Activated T-helper 1 cell treated with anti-CD3 and anti-CD28 coated beads, Interleukin-12 subunit alpha, Interleukin-12 subunit beta, Interleukin-2, Interleukin-4 antibody, amounts not matched to agents 30 ng/mL and 10 ng/mL and 1 ng/mL, durations not matched to agents 14 hours and 24 hours and 36 hours (primary cell): ENCODE measurements at regions of chr3 and their contacts with region 1.

Region 1: GRCh38 chr3:13895155-13896105 is 15.6 kb upstream of the WNT7A start:
- DNase-seq: peak; percentile 95
- H3K4me3 Mint-ChIP-seq: peak overlapping the region; percentile 89
- H3K27ac Mint-ChIP-seq: peak overlapping the region; percentile 79
- H3K4me1 Mint-ChIP-seq: peaks cover 22% of the 10 kb centered on the region
- H3K27me3 Mint-ChIP-seq: peaks cover 3% of the 10 kb centered on the region

Region 2: GRCh38 chr3:12868039-12869034 is 1027.1 kb before region 1 on chr3:
- intact Hi-C with region 1: loop called (anchors 10 kb)
- DNase-seq: peak; percentile 43
- H3K4me3 Mint-ChIP-seq: peak overlapping the region; percentile 65
- H3K27ac Mint-ChIP-seq: no peak overlapping the region
- H3K4me1 Mint-ChIP-seq: peaks cover 17% of the 10 kb centered on the region
- H3K27me3 Mint-ChIP-seq: peaks cover 29% of the 10 kb centered on the region

Region 3: GRCh38 chr3:13479581-13480339 is 415.7 kb before region 1 on chr3 and contains the start of gene HDAC11:
- intact Hi-C with region 1: loop called (anchors 1 kb)
- DNase-seq: peak; percentile 98
- H3K4me3 Mint-ChIP-seq: peak within 1 kb of the TSS; percentile 88
- H3K27ac Mint-ChIP-seq: peak within 1 kb of the TSS; percentile 84
- H3K4me1 Mint-ChIP-seq: peaks cover under 1% of the 10 kb centered on the region
- H3K27me3 Mint-ChIP-seq: peaks cover 7% of the 10 kb centered on the region
- total RNA-seq, gene HDAC11: 1.4 and 2.0 TPM in 2 replicates

Region 4: GRCh38 chr3:13612829-13613228 is 282.6 kb before region 1 on chr3:
- intact Hi-C with region 1: no loop called
- DNase-seq: no peak
- H3K4me3 Mint-ChIP-seq: no peak overlapping the region
- H3K27ac Mint-ChIP-seq: no peak overlapping the region
- H3K4me1 Mint-ChIP-seq: no peaks in the 10 kb centered on the region
- H3K27me3 Mint-ChIP-seq: no peaks in the 10 kb centered on the region

Region 5: DNA sequence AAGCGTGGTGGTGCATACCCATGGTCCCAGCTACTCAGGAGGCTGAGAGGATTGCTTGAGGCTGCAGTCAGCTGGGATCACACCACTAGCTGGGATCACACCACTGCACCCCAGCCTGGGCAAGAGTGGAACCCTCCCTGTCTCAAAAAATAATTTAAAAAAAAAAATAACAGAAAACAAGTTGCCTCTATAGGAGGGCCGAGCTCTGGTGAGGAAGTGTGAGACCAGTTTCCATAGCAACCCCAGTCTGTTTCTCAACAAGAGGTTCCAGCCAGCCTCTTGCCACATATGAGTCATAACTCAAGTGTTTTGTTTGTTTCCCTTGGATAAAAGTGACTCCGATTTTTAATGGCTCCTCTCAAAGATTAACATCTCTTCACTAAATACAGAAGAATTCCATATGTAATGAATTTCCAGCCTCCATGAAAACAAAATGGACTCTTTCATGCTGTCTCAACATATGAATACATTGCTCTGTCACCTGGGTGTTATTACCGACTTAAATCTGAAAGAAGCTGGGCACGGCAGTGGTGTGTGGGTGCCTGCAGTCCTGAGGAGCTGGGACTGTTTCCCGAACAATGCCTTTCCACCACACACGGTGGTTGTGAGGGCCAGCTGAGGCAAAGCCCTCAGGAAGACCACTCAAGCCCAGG is 249.1 kb after region 1 on chr3:
- intact Hi-C with region 1: loop called (anchors 1 kb)
- DNase-seq: peak; percentile 75
- H3K4me3 Mint-ChIP-seq: peak overlapping the region; percentile 64
- H3K27ac Mint-ChIP-seq: peak overlapping the region; percentile 93
- H3K4me1 Mint-ChIP-seq: peaks cover 59% of the 10 kb centered on the region
- H3K27me3 Mint-ChIP-seq: no peaks in the 10 kb centered on the region

Region 6: DNA sequence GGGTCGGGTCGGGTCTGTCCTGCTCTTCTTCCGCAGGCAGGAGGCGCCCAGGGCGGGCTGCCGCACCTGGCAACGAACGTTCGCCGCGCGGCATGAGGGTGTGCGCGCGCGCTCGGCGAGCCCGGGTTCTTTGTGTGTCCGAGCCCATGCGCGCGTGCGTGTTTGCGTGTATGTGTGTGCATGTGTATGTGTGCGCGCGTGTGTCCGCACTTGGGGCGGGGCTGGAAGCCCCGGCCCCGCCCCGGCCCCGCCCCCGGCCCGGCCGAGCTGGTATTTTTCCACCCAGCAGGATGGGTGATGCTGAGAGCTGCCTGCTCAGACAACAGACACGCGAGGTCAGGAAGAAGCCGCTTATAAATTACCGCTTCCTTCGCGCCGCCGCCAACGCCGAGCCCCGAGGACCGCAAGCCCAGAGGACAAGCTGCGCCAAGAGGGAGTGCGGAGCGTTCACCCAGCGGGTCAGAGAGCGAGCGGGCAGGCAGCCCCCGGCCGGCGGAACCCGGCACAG is 506.9 kb after region 1 on chr3 and contains the start of gene SLC6A6:
- intact Hi-C with region 1: loop called (anchors 1 kb)
- DNase-seq: peak; percentile 92
- H3K4me3 Mint-ChIP-seq: peak within 1 kb of the TSS; percentile 97
- H3K27ac Mint-ChIP-seq: peak within 1 kb of the TSS; percentile 96
- H3K4me1 Mint-ChIP-seq: peaks cover 42% of the 10 kb centered on the region
- H3K27me3 Mint-ChIP-seq: peaks cover 3% of the 10 kb centered on the region
- total RNA-seq, gene SLC6A6: 45.4 and 51.2 TPM in 2 replicates

Region 7: DNA sequence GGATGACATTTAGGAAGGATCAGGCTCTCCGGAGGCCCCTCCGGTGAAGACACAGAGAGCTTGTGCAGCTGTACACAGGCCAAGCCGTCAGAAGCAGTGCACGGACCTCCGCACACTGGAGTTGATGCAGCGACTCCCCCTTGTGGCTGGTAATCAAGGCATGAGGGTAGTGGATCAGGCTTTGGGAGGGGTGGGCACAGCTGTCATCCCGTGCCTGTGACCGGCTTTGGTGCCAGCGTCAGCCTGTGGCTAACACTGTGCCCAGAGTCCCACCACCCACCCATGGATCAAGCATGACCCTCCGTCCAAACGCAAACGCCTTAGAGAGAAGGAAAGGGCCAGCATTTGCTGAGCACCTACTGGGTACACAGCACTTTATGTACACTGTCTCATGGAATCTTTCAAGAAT is 652.9 kb after region 1 on chr3:
- intact Hi-C with region 1: loop called (anchors 5 kb)
- DNase-seq: no peak
- H3K4me3 Mint-ChIP-seq: no peak overlapping the region
- H3K27ac Mint-ChIP-seq: no peak overlapping the region
- H3K4me1 Mint-ChIP-seq: no peaks in the 10 kb centered on the region
- H3K27me3 Mint-ChIP-seq: peaks cover 19% of the 10 kb centered on the region